ENCODE measurements at regions of chr3 and their contacts with region 1.

Region 1: DNA sequence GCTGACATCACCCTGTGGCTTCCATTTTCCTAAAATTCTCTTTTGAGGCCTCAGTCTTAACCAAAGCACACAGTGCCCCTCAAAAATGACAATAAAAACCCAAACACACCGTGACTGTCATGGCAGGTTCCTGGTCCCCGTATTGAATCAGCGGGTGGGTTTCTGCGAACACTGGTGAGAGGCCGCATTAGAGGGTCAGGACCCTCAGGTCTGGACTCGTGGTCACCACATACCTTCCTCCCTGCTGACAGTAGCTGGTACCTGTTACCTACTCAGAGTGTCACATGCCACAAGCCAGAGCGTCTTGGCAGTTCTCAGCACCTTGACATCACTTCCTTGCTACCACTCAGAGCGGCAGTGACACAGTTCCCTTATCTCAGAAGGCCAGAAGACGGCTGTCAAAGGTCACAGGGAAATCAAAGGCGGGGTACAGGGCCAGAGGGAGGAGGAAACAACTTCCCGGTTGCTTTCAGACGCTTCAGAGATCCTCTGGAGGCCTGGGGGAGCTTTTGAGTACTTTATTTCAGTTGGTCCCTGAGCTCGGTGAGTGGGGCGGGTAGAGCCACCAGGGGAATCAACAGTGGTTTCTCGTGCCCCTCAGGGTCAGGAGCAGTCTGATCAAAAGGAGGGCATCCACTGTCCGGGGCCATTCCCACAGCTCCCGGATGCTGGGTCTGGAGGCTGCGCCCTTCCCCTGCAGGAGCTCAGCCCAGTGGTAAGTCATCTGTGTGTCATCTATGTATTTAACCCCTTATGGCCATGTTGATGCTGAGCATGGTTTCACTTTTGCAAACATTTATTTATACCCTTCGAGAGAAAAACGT is at the starts of genes CCR5AS and CCRL2:
- DNase-seq: peak; percentile 9 to 50 (median 31)
- ATAC-seq: peak; percentile 85
- H3K4me3 ChIP-seq: peak within 1 kb of the TSS; percentile 55
- H3K4me3 Mint-ChIP-seq: peak within 1 kb of the TSS; percentile 72 to 88 (median 84)
- H3K27ac ChIP-seq: peak within 1 kb of the TSS; percentile 57
- H3K27ac Mint-ChIP-seq: peak within 1 kb of the TSS; percentile 76 to 95 (median 86)
- H3K4me1 ChIP-seq: peaks cover 5 to 10% of the 10 kb centered on the region in 2 donors
- H3K4me1 Mint-ChIP-seq: peaks cover 11 to 37% (median 33%) of the 10 kb centered on the region in 7 donors
- H3K27me3 ChIP-seq: no peaks in the 10 kb centered on the region
- H3K27me3 Mint-ChIP-seq: peaks cover 0 to 23% (median 0%) of the 10 kb centered on the region in 5 donors
- total RNA-seq, gene CCRL2: 0.35 to 20.5 (median 5.0) TPM

Region 2: GRCh38 chr3:45064512-45065372 is 1342.3 kb before region 1 on chr3:
- CTCF ChIA-PET with region 1: no interaction called
- POLR2A ChIA-PET with region 1: no interaction called
- intact Hi-C with region 1: loop called in 1 of 2 experiments (anchors 5 kb)
- DNase-seq: peak in 1 of 9 donors; percentile 51
- ATAC-seq: peak; percentile 85
- H3K4me3 ChIP-seq: no peak overlapping the region
- H3K4me3 Mint-ChIP-seq: peak overlapping the region; percentile 11 to 81 (median 58)
- H3K27ac ChIP-seq: no peak overlapping the region
- H3K27ac Mint-ChIP-seq: peak overlapping the region in 1 of 9 donors; percentile 90
- H3K4me1 ChIP-seq: peaks cover 0 to 7% of the 10 kb centered on the region in 2 donors
- H3K4me1 Mint-ChIP-seq: peaks cover 12 to 32% (median 17%) of the 10 kb centered on the region in 7 donors
- H3K27me3 ChIP-seq: no peaks in the 10 kb centered on the region
- H3K27me3 Mint-ChIP-seq: peaks cover 0 to 7% (median 4%) of the 10 kb centered on the region in 5 donors

Region 3: GRCh38 chr3:46442576-46443562 is 35.9 kb after region 1 on chr3:
- CTCF ChIA-PET with region 1: no interaction called
- POLR2A ChIA-PET with region 1: no interaction called
- intact Hi-C with region 1: loop called in 1 of 2 experiments (anchors 2 kb)
- DNase-seq: peak in 2 of 9 donors; percentile 35 to 43
- ATAC-seq: peak; percentile 56
- H3K4me3 ChIP-seq: no peak overlapping the region
- H3K4me3 Mint-ChIP-seq: no peak overlapping the region
- H3K27ac ChIP-seq: no peak overlapping the region
- H3K27ac Mint-ChIP-seq: peak overlapping the region in 1 of 9 donors; percentile 58
- H3K4me1 ChIP-seq: peaks cover 12 to 13% of the 10 kb centered on the region in 2 donors
- H3K4me1 Mint-ChIP-seq: peaks cover 15 to 36% (median 27%) of the 10 kb centered on the region in 7 donors
- H3K27me3 ChIP-seq: no peaks in the 10 kb centered on the region
- H3K27me3 Mint-ChIP-seq: peaks cover 0 to 8% (median 0%) of the 10 kb centered on the region in 5 donors

Measured in naive thymus-derived CD4-positive, alpha-beta T cell (primary cell).